Activated CD8-positive, alpha-beta memory T cell treated with anti-CD3 and anti-CD28 coated beads, Interleukin-2, amount 10 ng/mL, durations not matched to agents 7 days and 5 days (primary cell): ENCODE measurements at regions of chr2 and their contacts with region 1.

Region 1: GRCh38 chr2:160406591-160407392 is 86.8 kb downstream of the RBMS1 start:
- DNase-seq: peak; percentile 82
- ATAC-seq: peak; percentile 66
- H3K4me3 Mint-ChIP-seq: peak overlapping the region; percentile 95
- H3K27ac Mint-ChIP-seq: peak overlapping the region; percentile 84
- H3K4me1 Mint-ChIP-seq: peaks cover 75% of the 10 kb centered on the region
- H3K27me3 Mint-ChIP-seq: no peaks in the 10 kb centered on the region

Region 2: DNA sequence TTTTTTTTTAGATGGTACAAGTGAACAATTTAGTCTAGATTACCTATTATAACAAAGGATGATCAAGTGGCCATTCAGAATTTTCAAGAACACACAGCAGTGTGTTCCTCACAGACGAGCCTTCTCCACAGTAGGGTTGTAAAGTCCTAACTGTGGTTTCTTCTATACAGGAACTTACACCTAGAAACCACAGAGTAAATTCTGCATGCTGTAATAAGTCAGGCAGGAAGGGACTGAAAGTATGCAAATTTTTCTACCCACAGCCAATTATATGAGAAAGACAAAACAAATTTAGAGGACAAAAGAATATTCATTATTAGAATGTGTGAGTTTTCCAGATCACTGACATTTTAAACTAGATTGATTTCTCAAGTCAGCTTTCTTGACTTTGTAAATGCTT is 12.6 kb before region 1 on chr2:
- CTCF ChIA-PET with region 1: interaction called, 11 read pairs
- DNase-seq: no peak
- ATAC-seq: peak; percentile 96
- H3K4me3 Mint-ChIP-seq: no peak overlapping the region
- H3K27ac Mint-ChIP-seq: peak overlapping the region; percentile 80
- H3K4me1 Mint-ChIP-seq: peaks cover 53% of the 10 kb centered on the region
- H3K27me3 Mint-ChIP-seq: no peaks in the 10 kb centered on the region

Region 3: GRCh38 chr2:160429248-160430000 is 22.6 kb after region 1 on chr2:
- CTCF ChIA-PET with region 1: interaction called, 33 read pairs
- DNase-seq: no peak
- ATAC-seq: peak; percentile 49
- H3K4me3 Mint-ChIP-seq: no peak overlapping the region
- H3K27ac Mint-ChIP-seq: peak overlapping the region; percentile 94
- H3K4me1 Mint-ChIP-seq: peaks cover 54% of the 10 kb centered on the region
- H3K27me3 Mint-ChIP-seq: no peaks in the 10 kb centered on the region

Region 4: DNA sequence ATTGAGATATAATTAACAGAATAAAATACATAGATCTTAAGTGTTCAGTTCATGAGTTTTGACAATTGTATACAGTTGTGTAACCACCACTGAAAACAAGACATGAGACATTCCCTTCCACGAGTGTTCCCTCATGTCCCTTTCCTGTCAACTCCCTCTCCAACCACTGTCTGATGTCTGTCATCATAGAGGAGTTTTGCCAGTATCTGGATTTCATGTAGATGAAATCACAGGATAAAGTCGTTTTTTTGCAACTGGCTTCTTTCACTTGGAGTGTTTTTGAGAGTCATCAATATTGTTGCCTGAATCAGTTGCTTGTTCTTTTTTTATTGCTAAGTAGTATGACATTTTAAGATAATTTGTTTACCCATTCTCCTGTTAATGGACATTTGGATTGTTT is 34.1 kb after region 1 on chr2:
- CTCF ChIA-PET with region 1: no interaction called
- DNase-seq: no peak
- ATAC-seq: no peak
- H3K4me3 Mint-ChIP-seq: no peak overlapping the region
- H3K27ac Mint-ChIP-seq: no peak overlapping the region
- H3K4me1 Mint-ChIP-seq: no peaks in the 10 kb centered on the region
- H3K27me3 Mint-ChIP-seq: no peaks in the 10 kb centered on the region

Region 5: GRCh38 chr2:160471950-160472349 is 65.2 kb after region 1 on chr2:
- CTCF ChIA-PET with region 1: no interaction called
- DNase-seq: no peak
- ATAC-seq: peak; percentile 23
- H3K4me3 Mint-ChIP-seq: no peak overlapping the region
- H3K27ac Mint-ChIP-seq: peak overlapping the region; percentile 17
- H3K4me1 Mint-ChIP-seq: peaks cover 36% of the 10 kb centered on the region
- H3K27me3 Mint-ChIP-seq: no peaks in the 10 kb centered on the region